Activated CD4-positive, alpha-beta T cell treated with anti-CD3 and anti-CD28 coated beads, Interleukin-2, amount 10 ng/mL, durations not matched to agents 24 days and 14 days (primary cell): ENCODE measurements at regions of chr2 and their contacts with region 1.

Region 1: GRCh38 chr2:136384531-136385303 is 266.8 kb upstream of the CXCR4 start:
- DNase-seq: peak; percentile 87
- H3K4me3 Mint-ChIP-seq: peak overlapping the region; percentile 27
- H3K27ac Mint-ChIP-seq: peak overlapping the region; percentile 93
- H3K4me1 Mint-ChIP-seq: peaks cover 44% of the 10 kb centered on the region
- H3K27me3 Mint-ChIP-seq: no peaks in the 10 kb centered on the region

Region 2: DNA sequence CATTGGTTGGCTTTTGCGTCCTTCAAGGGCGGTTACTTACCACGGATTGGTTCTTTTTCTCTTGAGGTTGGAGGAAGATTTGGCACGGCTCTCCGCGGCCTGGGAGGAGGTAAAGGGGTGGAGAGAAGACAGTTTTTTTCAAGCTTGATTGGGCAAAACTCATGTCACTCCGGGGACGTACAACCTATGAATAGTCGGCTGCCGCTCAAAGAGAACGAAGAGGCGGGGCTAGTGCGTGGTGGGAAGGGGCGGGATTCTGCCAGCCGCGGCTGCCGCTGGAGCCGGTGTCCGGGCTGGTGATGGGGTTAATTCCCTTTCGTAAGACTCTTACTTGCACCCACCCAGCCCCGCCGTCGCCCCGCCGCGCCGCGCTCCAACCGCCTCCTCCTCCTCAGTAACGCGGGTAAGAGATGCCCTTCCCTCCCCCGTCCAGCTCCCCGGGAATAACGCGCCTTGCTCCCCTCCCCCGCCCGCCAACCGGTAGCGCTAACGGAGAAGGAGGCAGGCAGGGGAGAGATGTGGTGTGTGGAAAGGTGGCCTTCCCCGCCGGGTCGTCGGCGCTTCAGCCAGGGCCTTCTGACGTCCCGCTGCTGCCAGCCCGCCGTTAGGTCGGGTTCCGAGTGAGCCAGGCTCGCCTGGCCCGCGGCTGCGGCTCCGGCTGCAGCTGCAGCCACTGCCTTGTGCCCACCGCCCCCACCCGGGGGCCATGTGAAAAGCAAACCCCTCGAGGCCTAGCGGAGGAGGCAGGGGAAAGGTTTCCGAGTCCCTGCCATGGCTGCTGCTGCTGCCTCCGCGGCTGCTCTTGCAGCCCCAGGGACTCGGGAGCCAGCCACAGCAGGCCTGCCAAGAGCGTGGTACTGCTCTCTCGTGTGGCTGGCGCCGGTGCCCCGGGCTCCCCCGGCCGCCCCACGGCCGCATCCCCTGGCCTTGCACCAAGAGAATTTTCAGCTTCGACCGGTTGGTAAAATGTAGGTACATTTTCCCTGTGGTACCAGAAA is 853.2 kb before region 1 on chr2 and contains the start of gene R3HDM1:
- intact Hi-C with region 1: loop called (anchors 5 kb)
- DNase-seq: peak; percentile 97
- H3K4me3 Mint-ChIP-seq: no peak within 1 kb of the TSS
- H3K27ac Mint-ChIP-seq: no peak within 1 kb of the TSS
- H3K4me1 Mint-ChIP-seq: peaks cover 29% of the 10 kb centered on the region
- H3K27me3 Mint-ChIP-seq: no peaks in the 10 kb centered on the region
- total RNA-seq, gene R3HDM1: 65.8 and 78.3 TPM in 2 replicates

Region 3: DNA sequence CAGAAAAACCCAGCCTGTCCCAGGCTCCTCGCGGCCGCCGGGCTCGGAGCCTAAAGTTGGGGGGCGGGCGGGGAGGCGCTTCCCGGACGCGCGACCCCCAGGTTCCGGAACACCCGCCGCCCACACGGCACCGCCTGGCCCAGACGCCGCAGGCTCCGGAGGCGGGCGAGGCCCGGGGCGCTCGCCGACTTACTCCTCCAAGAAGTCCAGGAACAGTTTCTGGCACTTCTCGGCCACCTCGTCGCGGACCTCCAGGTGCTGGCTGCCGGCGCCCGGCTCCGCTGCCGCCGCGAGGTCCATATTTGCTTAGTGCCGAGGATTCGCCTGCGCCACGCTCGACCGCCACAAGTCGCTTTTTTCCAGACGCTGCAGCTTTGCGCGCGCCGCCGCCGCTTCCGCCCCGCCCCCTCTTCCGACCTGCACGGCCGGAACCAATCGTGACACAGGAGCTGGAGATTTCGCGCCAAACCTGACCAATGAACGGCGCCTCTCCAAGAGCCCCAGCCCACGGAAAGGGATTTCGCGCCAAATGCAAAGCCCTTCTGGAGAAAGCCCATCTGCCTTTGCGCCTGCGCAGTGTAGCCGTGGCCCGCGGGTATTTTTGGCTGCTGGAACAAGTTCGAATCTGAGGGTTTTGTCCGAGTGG is 508.5 kb before region 1 on chr2 and contains the start of gene MCM6:
- intact Hi-C with region 1: loop called (anchors 1 kb)
- DNase-seq: peak; percentile 100
- H3K4me3 Mint-ChIP-seq: peak within 1 kb of the TSS; percentile 83
- H3K27ac Mint-ChIP-seq: peak within 1 kb of the TSS; percentile 97
- H3K4me1 Mint-ChIP-seq: peaks cover 31% of the 10 kb centered on the region
- H3K27me3 Mint-ChIP-seq: peaks cover 2% of the 10 kb centered on the region
- total RNA-seq, gene MCM6: 196 and 197 TPM in 2 replicates

Region 4: DNA sequence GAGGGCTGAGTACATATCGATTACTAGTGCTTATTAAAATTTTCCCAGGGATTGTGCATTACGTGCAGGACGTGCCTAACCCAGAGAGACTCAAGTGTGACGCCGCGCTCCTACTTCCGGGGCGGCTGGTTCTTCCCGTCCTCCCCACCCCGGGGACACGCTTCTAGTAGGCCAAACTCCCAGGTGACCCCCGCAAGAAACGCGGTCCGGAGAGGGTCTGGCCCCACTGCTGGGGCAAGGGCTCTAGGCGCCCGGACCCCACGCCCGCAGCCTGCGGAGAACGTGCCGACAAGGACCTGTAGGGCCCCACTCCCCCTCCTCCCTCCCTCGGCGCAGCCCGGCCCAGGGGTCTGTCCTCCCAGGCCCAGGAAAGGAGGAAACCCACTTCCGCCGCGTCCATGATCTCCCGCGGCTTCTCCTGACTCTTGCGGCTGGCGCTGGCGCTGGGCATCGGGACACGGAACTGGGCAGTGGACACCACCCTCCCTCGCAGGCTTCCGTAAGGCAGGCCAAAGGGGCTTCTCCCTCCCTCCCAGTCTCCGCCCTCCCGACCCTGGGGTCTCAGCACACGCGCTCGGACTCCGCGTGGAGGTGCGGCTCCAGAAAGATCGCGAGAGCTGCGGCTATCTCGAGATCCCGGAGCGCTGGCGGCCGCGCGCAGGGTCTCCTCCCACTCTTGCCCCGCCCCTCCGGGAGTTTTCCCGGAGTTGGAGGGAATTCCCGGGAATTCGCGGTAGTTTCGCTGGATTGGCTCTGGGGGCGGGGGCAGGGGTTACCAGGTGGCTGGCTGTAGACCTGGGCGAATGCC is 399.5 kb before region 1 on chr2 and contains the start of gene DARS1:
- intact Hi-C with region 1: loop called (anchors 1 kb)
- DNase-seq: peak; percentile 95
- H3K4me3 Mint-ChIP-seq: peak within 1 kb of the TSS; percentile 93
- H3K27ac Mint-ChIP-seq: peak within 1 kb of the TSS; percentile 100
- H3K4me1 Mint-ChIP-seq: peaks cover 48% of the 10 kb centered on the region
- H3K27me3 Mint-ChIP-seq: no peaks in the 10 kb centered on the region
- total RNA-seq, gene DARS1: 153 and 160 TPM in 2 replicates

Region 5: DNA sequence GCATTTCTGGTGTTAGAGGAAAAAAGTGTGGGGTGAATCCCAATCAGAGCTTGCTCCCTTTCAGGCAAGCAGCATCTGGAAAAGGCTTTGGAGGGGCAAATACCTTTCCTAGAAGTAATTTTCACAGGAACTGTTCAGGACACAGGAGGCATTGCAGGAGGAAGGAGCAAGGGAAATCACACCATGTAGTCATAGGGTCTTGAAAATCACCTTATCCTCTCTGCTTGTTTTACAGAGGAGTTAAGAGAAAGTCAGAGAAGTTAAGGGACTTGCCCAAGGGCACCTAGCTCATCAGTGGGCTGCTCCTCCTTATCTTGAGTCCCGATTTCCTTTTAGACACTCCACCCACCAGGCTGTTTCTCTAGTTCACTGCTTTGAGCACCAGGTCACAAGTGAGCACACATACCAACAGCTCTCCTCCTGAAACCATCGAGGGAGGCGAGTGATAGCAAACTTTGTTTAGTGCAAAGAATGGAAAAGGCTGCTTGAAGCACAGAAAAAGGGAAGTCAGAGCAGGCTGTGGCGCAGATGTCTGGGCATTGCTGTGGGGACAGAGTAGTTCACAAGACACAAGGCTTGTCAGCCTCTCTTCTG is 177.6 kb before region 1 on chr2:
- intact Hi-C with region 1: loop called (anchors 2 kb)
- DNase-seq: peak; percentile 60
- H3K4me3 Mint-ChIP-seq: peak overlapping the region; percentile 8
- H3K27ac Mint-ChIP-seq: peak overlapping the region; percentile 92
- H3K4me1 Mint-ChIP-seq: peaks cover 23% of the 10 kb centered on the region
- H3K27me3 Mint-ChIP-seq: peaks cover 4% of the 10 kb centered on the region

Region 6: DNA sequence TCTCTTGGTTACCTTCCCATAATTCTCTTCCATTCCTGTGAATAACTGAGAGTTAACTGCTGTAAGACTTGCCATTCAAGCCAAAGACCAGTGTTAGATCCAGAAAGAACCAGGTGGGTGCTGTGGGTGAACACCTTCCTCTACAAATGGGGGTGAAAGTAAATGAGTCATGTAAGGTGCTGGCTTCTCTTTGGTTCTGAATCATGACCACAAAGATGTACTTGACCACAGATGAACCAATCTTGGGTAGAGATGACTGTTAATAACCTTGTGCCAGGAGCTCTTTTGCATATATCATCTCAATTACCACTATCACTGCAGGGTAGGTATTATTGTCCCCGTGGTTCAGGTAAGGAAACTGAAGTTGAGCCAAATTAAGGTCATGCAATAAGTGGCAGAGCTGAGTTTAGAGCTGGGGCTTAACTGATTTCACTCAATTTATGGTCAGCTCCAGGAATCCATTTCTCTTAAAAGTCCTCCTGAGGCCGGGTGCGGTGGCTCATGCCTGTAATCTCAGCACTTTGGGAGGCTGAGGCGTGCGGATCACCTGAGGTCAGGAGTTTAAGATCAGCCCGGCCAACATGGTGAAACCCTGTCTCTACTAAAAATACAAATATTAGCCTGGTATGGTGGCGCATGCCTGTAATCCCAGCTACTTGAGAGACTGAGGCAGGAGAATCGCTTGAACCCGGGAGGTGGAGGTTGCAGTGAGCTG is 21.9 kb before region 1 on chr2:
- intact Hi-C with region 1: loop called (anchors 1 kb)
- DNase-seq: peak; percentile 75
- H3K4me3 Mint-ChIP-seq: peak overlapping the region; percentile 34
- H3K27ac Mint-ChIP-seq: peak overlapping the region; percentile 57
- H3K4me1 Mint-ChIP-seq: peaks cover 40% of the 10 kb centered on the region
- H3K27me3 Mint-ChIP-seq: no peaks in the 10 kb centered on the region